H1 (cell line): ENCODE measurements at regions of chr19 and their contacts with region 1.

Region 1: DNA sequence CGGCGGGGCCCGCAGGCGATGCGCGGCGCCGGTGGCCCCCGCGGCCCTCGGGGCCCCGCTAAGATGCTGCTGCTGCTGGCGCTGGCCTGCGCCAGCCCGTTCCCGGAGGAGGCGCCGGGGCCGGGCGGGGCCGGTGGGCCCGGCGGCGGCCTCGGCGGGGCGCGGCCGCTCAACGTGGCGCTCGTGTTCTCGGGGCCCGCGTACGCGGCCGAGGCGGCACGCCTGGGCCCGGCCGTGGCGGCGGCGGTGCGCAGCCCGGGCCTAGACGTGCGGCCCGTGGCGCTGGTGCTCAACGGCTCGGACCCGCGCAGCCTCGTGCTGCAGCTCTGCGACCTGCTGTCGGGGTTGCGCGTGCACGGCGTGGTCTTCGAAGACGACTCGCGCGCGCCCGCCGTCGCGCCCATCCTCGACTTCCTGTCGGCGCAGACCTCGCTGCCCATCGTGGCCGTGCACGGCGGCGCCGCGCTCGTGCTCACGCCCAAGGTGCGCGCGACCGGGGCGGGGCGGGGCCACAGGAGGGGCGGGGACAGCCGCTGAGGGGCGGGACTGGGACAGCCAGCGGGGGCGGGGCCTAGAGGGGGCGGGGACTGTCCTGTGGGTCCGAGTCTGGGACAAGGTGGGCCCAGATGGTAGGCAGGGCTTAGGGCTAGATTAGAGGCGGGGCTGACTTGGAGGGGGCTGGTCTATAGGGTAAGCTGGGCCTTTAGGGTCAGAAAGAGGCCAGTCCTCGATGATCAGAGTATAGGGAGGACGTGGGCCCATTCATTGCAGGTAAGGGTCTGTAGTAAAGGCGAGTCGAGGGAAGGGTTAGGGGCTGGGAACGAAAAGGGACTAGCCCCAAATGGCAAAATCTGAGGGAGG is 5.1 kb downstream of the GRIN2D start:
- DNase-seq: peak; percentile 88 to 98
- H3K4me3 ChIP-seq: peak overlapping the region; percentile 32 to 86 (median 61)
- H3K27ac ChIP-seq: no peak overlapping the region
- H3K4me1 ChIP-seq: peaks cover 8 to 44% (median 36%) of the 10 kb centered on the region in 4 experiments
- H3K27me3 ChIP-seq: peaks cover 6 to 43% (median 38%) of the 10 kb centered on the region in 4 experiments
- CTCF ChIP-seq: no peak
- EP300 ChIP-seq: no peak
- POLR2A ChIP-seq: no peak
- RAD21 ChIP-seq: no peak

Region 2: GRCh38 chr19:48218997-48219396 is 179.6 kb before region 1 on chr19:
- CTCF ChIA-PET with region 1: no interaction called
- POLR2A ChIA-PET with region 1: no interaction called
- DNase-seq: no peak
- H3K4me3 ChIP-seq: no peak overlapping the region
- H3K27ac ChIP-seq: no peak overlapping the region
- H3K4me1 ChIP-seq: no peaks in the 10 kb centered on the region; a peak in 1 of 7 replicates
- H3K27me3 ChIP-seq: no peaks in the 10 kb centered on the region
- CTCF ChIP-seq: no peak
- EP300 ChIP-seq: no peak
- POLR2A ChIP-seq: no peak
- RAD21 ChIP-seq: no peak

Region 3: DNA sequence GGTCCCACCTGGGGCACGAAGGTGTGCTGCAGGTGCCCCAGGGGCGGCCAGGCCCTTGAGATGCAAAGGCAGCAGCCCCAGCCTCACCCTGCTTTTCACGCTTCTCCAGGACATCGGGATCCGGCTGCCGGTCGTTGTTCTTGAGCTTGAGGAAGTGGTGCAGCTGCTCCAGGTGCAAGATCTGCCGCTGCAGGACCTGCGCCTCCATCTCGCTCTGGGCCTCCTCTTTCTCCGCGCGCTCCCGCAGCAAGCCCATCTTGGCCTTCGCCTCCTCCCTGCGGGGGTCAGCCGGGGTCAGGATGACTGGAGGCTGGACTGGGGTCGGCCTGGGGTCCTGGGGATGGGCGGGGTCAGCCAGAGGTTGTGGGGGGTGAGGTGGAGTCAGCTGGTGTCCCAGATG is 94.7 kb before region 1 on chr19:
- CTCF ChIA-PET with region 1: no interaction called
- POLR2A ChIA-PET with region 1: no interaction called
- DNase-seq: no peak
- H3K4me3 ChIP-seq: no peak overlapping the region
- H3K27ac ChIP-seq: no peak overlapping the region
- H3K4me1 ChIP-seq: peaks cover 0 to 3% (median 1%) of the 10 kb centered on the region in 4 experiments; a peak in 3 of 7 replicates
- H3K27me3 ChIP-seq: no peaks in the 10 kb centered on the region
- CTCF ChIP-seq: no peak
- EP300 ChIP-seq: no peak
- POLR2A ChIP-seq: no peak
- RAD21 ChIP-seq: no peak

Region 4: DNA sequence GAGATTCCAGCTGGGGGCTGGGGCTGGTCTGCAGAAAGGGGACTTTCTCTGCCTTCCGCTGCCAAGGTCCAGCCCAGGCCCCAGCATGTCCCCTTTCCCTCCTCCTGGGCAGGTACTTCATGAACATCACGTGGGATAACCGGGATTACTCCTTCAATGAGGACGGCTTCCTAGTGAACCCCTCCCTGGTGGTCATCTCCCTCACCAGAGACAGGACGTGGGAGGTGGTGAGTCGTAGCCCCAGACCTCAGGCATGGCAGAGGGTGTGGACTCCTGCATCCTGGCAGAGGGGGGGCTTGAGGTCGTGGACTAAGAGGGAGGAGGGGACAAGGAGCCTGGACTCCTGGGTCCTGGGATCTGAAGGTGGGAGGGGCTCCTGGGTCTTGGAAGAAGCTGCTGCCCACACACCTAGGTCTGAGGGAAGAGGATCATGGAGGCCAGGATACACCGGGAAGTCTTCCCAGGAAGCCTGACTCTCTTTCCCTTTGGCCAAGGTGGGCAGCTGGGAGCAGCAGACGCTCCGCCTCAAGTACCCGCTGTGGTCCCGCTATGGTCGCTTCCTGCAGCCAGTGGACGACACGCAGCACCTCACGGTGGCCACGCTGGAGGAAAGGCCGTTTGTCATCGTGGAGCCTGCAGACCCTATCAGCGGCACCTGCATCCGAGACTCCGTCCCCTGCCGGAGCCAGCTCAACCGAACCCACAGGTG is 15.4 kb after region 1 on chr19:
- CTCF ChIA-PET with region 1: interaction called, 11 read pairs
- POLR2A ChIA-PET with region 1: interaction called, 57 read pairs
- DNase-seq: peak in 1 of 2 experiments; percentile 70
- H3K4me3 ChIP-seq: peak overlapping the region in 3 of 4 experiments; percentile 23 to 55 (median 40); a peak in 5 of 8 replicates
- H3K27ac ChIP-seq: no peak overlapping the region
- H3K4me1 ChIP-seq: peaks cover 0 to 18% (median 8%) of the 10 kb centered on the region in 4 experiments; a peak in 5 of 7 replicates
- H3K27me3 ChIP-seq: no peaks in the 10 kb centered on the region; a peak in 1 of 7 replicates
- CTCF ChIP-seq: peak in 2 of 3 experiments; percentile 7 to 34; a peak in 2 of 4 replicates
- EP300 ChIP-seq: no peak
- POLR2A ChIP-seq: no peak
- RAD21 ChIP-seq: no peak; a peak in 1 of 4 replicates

Region 5: GRCh38 chr19:48419158-48419920 is 20.7 kb after region 1 on chr19:
- CTCF ChIA-PET with region 1: interaction called, 11 read pairs
- POLR2A ChIA-PET with region 1: interaction called, 57 read pairs
- DNase-seq: peak; percentile 49 to 86
- H3K4me3 ChIP-seq: no peak overlapping the region
- H3K27ac ChIP-seq: peak overlapping the region; percentile 54; the same call in 1 of the 2 replicates
- H3K4me1 ChIP-seq: peaks cover 0 to 13% (median 5%) of the 10 kb centered on the region in 4 experiments; a peak in 5 of 7 replicates
- H3K27me3 ChIP-seq: no peaks in the 10 kb centered on the region; a peak in 1 of 7 replicates
- CTCF ChIP-seq: no peak
- EP300 ChIP-seq: no peak
- POLR2A ChIP-seq: no peak
- RAD21 ChIP-seq: no peak

Region 6: GRCh38 chr19:48445606-48446481 is 47.2 kb after region 1 on chr19 and contains the start of gene GRWD1:
- CTCF ChIA-PET with region 1: no interaction called
- POLR2A ChIA-PET with region 1: interaction called, 16 read pairs
- DNase-seq: peak; percentile 90 to 91
- H3K4me3 ChIP-seq: peak within 1 kb of the TSS; percentile 80 to 99 (median 95)
- H3K27ac ChIP-seq: peak within 1 kb of the TSS; percentile 62
- H3K4me1 ChIP-seq: peaks cover 0 to 5% (median 4%) of the 10 kb centered on the region in 4 experiments; a peak in 4 of 7 replicates
- H3K27me3 ChIP-seq: no peaks in the 10 kb centered on the region
- CTCF ChIP-seq: no peak
- EP300 ChIP-seq: no peak
- POLR2A ChIP-seq: peak; percentile 47 to 94
- RAD21 ChIP-seq: 0 out of 4 replicates have a peak, but pooled peaks of 1 of the 2 experiments have one; percentile 0
- total RNA-seq, gene GRWD1: 61.9 and 64.9 TPM in 2 replicates

Region 7: DNA sequence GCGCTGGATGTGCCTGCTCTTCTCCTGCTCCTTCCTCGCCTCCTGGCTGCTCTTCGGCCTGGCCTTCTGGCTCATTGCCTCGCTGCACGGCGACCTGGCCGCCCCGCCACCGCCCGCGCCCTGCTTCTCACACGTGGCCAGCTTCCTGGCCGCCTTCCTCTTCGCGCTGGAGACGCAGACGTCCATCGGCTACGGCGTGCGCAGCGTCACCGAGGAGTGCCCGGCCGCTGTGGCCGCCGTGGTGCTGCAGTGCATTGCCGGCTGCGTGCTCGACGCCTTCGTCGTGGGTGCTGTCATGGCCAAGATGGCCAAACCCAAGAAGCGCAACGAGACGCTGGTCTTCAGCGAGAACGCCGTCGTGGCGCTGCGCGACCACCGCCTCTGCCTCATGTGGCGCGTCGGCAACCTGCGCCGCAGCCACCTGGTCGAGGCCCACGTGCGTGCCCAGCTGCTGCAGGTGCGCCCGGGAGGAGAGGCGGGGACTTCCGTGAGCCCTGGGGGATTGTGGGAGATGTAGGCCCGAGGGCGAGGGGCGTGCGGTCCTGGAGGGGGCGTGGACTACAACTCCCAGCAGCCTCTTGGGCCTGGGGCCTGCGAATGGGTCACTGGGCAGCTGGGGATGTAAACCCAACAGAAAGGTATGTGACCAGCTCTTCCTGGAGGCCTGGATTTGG is 63.5 kb after region 1 on chr19:
- CTCF ChIA-PET with region 1: interaction called, 3 read pairs
- POLR2A ChIA-PET with region 1: interaction called, 11 read pairs
- DNase-seq: peak; percentile 75 to 88
- H3K4me3 ChIP-seq: no peak overlapping the region
- H3K27ac ChIP-seq: no peak overlapping the region
- H3K4me1 ChIP-seq: peaks cover 0 to 2% (median under 1%) of the 10 kb centered on the region in 4 experiments; a peak in 1 of 7 replicates
- H3K27me3 ChIP-seq: no peaks in the 10 kb centered on the region
- CTCF ChIP-seq: no peak
- EP300 ChIP-seq: no peak
- POLR2A ChIP-seq: no peak
- RAD21 ChIP-seq: no peak

Region 8: DNA sequence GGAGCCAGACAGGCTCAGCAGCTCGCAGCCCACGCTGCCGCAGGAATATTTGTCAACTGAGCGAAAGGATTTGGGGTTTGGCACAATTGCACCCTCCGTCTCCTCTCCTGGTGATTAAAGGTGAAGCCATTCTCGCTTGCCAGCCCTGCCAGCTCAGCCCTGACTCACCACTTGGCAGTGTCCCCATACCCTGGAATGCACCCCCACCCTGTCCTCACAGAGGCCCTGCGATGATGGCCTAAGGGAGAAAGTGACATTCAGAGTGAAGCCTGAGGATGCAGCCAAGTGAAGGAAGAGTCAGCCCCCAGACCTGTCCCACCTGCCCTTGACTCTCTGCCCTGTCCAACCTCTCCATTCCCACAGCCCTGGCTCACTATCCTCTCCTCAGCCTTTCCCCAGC is 89.4 kb after region 1 on chr19:
- CTCF ChIA-PET with region 1: interaction called, 6 read pairs
- POLR2A ChIA-PET with region 1: interaction called, 10 read pairs
- DNase-seq: no peak
- H3K4me3 ChIP-seq: no peak overlapping the region
- H3K27ac ChIP-seq: no peak overlapping the region
- H3K4me1 ChIP-seq: peaks cover 0 to 17% (median 13%) of the 10 kb centered on the region in 4 experiments; a peak in 6 of 7 replicates
- H3K27me3 ChIP-seq: peaks cover 0 to 5% (median 3%) of the 10 kb centered on the region in 4 experiments; a peak in 3 of 7 replicates
- CTCF ChIP-seq: no peak
- EP300 ChIP-seq: no peak
- POLR2A ChIP-seq: no peak; a peak in 1 of 3 replicates
- RAD21 ChIP-seq: no peak

Region 9: GRCh38 chr19:48530066-48530720 is 131.6 kb after region 1 on chr19:
- CTCF ChIA-PET with region 1: no interaction called
- POLR2A ChIA-PET with region 1: no interaction called
- DNase-seq: no peak
- H3K4me3 ChIP-seq: no peak overlapping the region
- H3K27ac ChIP-seq: no peak overlapping the region
- H3K4me1 ChIP-seq: 0 out of 7 replicates have a peak, but pooled peaks cover 0 to 2% (median 0%) of the 10 kb centered on the region in 4 experiments
- H3K27me3 ChIP-seq: no peaks in the 10 kb centered on the region
- CTCF ChIP-seq: no peak
- EP300 ChIP-seq: no peak
- POLR2A ChIP-seq: no peak
- RAD21 ChIP-seq: no peak